ENCODE measurements at regions of chr11 and their contacts with region 1.

Region 1: DNA sequence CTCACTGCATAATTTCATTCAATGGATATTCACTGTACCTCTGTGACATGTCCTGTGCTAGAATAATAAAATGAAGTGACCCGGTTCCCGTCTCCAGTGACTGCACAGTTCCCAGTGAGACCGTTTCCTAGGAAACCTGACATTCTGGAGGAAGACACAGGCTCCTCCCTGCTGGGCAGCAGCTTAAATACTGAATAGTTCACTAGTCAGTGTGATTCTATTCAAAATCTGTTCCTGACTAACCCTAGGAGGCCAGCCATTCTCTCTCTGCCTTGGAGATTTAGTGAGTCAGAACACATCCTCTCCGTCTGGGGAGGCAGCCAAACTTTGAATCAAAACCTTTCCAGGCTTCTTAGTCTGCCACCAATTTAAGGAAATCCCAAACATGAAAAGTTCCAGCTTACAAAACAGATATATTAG is 11.3 kb downstream of the TRIM66 start:
- DNase-seq: peak; percentile 73
- H3K27ac ChIP-seq: peak overlapping the region; percentile 98
- CTCF ChIP-seq: no peak

Region 2: DNA sequence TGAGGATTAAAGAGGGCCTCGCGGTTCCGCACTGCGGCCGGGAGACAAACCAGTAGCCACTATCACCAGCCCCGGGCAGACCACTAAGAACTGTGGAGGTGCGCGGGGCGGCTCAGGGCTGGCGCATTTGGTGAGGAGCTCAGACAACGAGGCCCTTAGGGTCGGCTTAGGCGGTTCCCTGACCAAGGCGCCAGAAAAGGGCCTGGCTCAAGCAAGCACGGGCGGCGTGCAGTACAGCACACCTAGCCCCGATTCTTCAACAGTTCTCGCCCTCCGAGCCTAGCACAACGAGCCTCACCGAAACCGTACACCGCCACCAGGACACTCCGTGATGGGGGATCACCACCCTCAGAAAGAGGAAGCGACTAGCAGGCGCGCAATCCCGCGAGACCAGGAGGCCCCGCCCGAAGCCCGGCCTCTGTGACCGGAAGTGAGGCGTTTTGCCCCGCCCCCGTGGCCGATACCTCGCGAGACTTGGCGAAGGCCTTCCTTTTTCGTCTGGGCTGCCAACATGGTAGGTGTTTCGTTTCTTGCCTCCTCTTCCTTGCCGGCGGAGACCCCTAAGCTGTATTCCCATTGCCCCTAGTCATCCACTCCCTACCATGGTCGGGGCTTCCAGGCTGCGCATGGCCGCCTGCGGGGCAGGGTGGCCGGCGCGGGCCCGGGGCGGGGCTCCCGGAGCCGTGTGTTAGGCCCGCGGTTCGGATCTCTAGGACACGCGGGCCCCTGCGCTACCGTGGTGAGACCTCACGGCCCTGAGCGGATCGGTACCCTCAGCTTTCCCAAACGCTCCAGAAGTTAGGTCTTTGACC is 11.3 kb after region 1 on chr11 and contains the starts of genes RPL27A and TRIM66:
- CTCF ChIA-PET with region 1: interaction called, 3 read pairs
- POLR2A ChIA-PET with region 1: interaction called, 10 read pairs
- DNase-seq: peak; percentile 89
- H3K27ac ChIP-seq: peak within 1 kb of the TSS; percentile 90
- CTCF ChIP-seq: no peak